Dendritic cell treated with granulocyte-macrophage colony-stimulating factor and Interleukin-4, amounts not matched to agents 40 ng/mL and 50 ng/mL, for 4 days (primary cell): ENCODE measurements at regions of chr16 and their contacts with region 1.

Region 1: GRCh38 chr16:11181899-11182279 is 74.1 kb downstream of the SOCS1 start:
- H3K4me3 Mint-ChIP-seq: peak overlapping the region; percentile 82
- H3K27ac Mint-ChIP-seq: peak overlapping the region; percentile 90
- H3K4me1 Mint-ChIP-seq: peaks cover 81% of the 10 kb centered on the region
- H3K27me3 Mint-ChIP-seq: no peaks in the 10 kb centered on the region

Region 2: DNA sequence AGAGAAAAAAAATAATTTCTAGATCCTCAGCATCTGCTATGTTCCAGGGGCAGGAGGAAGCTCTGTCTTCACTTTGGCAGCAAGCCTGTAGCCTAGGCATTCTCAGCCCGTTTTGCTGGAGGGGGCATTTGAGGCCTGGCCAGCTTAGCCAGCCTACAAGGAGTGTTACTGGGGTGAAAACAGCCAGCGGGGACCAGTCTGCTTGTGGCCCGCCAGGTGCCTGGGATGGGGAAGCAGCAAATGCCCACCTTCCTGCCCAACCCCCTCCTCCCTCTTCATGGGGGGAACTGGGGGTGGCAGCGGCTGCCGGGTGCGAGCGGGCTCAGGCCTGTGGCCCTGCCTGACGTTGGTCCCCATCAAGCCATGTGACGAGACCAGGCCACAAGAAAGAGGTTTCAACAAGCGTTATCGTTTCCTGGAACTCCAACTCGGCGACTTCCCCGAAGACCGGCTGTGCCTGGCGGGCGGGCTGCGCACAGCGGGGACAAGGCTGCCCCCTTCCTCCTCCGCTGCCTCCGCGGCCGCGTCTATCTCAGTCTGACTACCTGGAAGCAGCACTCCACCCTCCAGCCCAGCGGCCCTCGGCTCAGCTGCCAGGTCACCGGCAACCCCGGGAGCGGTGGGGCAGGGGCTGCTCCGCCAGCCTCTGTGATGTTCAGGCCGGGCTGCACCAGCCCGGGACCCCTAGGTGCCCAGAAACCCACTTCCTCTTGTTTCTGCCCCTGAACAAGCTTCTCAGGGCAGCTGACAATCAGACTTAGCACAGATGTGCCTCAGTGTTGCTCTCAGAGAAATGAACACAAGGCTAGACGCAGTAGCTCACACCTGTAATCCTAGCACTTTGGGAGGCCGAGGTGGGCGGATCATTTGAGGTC is 51.2 kb after region 1 on chr16:
- intact Hi-C with region 1: loop called (anchors 5 kb)
- H3K4me3 Mint-ChIP-seq: peak overlapping the region; percentile 44
- H3K27ac Mint-ChIP-seq: peak overlapping the region; percentile 89
- H3K4me1 Mint-ChIP-seq: peaks cover 74% of the 10 kb centered on the region
- H3K27me3 Mint-ChIP-seq: peaks cover 3% of the 10 kb centered on the region

Region 3: GRCh38 chr16:11361701-11362451 is 180.0 kb after region 1 on chr16:
- intact Hi-C with region 1: loop called (anchors 5 kb)
- H3K4me3 Mint-ChIP-seq: peak overlapping the region; percentile 74
- H3K27ac Mint-ChIP-seq: peak overlapping the region; percentile 98
- H3K4me1 Mint-ChIP-seq: peaks cover 97% of the 10 kb centered on the region
- H3K27me3 Mint-ChIP-seq: peaks cover 35% of the 10 kb centered on the region